HEK293 (cell line): ENCODE measurements at regions of chr12 and their contacts with region 1.

Region 1: GRCh38 chr12:6867413-6868210 is at the start of gene TPI1:
- H3K4me3 ChIP-seq: peak within 1 kb of the TSS; percentile 87
- H3K27ac ChIP-seq: peak within 1 kb of the TSS; percentile 98
- H3K4me1 ChIP-seq: peaks cover 7% of the 10 kb centered on the region
- CTCF ChIP-seq: peak; percentile 10; the same call in 1 of the 2 replicates

Region 2: GRCh38 chr12:6796576-6796975 is 71.0 kb before region 1 on chr12:
- CTCF ChIA-PET with region 1: no interaction called
- POLR2A ChIA-PET with region 1: no interaction called
- H3K4me3 ChIP-seq: no peak overlapping the region
- H3K27ac ChIP-seq: no peak overlapping the region
- H3K4me1 ChIP-seq: no peaks in the 10 kb centered on the region
- CTCF ChIP-seq: no peak

Region 3: DNA sequence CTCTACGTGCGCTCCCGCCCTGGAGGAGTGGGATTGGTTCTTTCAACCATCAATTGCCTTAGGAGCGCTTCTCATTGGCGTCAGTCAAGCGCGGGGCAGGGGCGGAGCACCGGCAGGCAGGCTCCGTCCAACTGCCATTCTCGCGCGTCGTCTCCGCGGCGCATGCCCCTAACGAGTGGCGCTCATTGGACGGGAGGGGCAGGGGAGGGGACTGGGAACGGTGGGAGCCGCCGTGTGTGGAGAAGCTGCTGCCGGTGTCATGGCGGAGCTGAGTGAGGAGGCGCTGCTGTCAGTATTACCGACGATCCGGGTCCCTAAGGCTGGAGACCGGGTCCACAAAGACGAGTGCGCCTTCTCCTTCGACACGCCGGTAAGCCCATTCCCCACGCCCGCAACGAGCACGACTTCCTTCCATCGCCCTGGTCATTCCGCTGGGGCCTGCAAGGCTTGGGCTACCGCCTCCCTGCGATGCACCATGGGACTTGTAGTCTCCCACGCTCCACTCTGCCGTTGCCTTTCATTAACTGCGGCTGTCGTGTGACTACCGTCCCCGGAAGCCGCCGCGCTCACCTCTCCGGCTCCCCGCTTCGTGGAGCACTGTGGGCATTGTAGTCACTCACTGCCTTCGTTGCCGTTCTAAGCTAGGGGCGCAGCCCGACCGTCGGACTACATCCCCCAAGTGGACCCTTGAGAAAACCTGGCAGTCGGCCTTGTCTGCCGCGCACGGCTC is 15.5 kb before region 1 on chr12 and contains the start of gene USP5:
- CTCF ChIA-PET with region 1: interaction called, 71 read pairs
- POLR2A ChIA-PET with region 1: interaction called, 183 read pairs
- H3K4me3 ChIP-seq: peak within 1 kb of the TSS; percentile 76
- H3K27ac ChIP-seq: peak within 1 kb of the TSS; percentile 58
- H3K4me1 ChIP-seq: peaks cover 11% of the 10 kb centered on the region
- CTCF ChIP-seq: peak; percentile 70

Region 4: DNA sequence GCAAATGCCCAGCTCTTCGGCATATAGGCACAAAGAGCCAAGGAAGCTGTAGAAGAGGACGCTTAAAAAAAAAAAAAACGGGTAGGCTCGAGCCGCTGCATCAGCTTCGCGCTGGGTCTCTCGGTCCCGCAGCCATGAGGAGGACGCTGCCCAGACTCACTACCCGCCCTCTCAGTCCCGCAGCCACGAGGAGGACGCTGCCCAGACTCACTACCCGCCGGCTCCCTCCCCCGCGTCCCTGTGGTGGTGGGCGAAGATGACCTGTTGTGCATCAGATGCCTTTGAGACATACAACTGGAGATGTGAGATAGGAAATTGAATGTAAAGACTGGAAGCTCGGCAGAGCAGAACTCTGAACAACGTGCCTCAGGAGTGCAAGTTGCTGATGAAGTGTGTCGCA is 16.9 kb after region 1 on chr12:
- CTCF ChIA-PET with region 1: interaction called, 22 read pairs
- POLR2A ChIA-PET with region 1: interaction called, 23 read pairs
- H3K4me3 ChIP-seq: no peak overlapping the region
- H3K27ac ChIP-seq: no peak overlapping the region
- H3K4me1 ChIP-seq: no peaks in the 10 kb centered on the region
- CTCF ChIP-seq: no peak

Region 5: DNA sequence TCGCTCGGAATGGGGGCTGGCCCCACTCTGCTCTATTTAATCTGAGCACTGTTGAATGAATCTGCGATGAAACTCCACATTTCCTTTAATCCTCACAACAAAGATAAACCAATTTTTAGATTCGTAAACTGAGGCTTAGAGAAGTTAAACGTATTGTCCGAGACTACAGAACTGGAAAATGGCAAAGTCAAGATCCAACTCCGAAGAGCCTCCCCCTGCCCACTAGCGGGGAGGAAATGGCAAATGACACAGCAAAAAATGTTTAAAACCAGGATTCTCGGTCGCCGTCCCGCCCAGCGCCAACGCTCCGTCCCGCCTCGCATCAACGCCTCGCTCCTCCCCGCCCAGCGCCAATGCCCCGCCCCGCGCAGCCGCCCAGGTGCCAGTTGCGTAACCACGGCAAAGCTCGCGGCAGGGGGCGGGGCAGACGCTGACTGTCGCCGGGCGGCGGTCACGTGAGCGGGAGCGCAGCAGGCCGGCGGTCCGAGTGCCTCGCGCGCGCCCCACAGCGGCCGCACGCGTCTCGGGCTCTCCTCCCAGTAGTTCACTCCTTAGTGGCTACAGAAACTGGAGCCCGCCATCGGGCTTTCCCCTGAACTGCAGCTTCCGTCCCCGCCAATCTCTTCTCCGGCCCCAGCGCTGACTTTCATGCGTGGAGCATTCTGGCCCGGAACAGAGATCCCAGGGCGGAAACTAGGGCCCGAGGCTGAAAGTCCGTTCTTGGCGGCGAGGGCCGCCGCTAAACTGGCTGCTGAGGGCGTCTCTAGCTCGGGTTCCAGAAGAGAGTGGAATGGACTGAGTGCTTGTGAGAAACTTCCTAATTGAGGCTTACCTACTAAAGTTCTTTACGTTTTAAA is 23.4 kb after region 1 on chr12:
- CTCF ChIA-PET with region 1: interaction called, 35 read pairs
- POLR2A ChIA-PET with region 1: interaction called, 56 read pairs
- H3K4me3 ChIP-seq: peak overlapping the region; percentile 30
- H3K27ac ChIP-seq: peak overlapping the region; percentile 78
- H3K4me1 ChIP-seq: no peaks in the 10 kb centered on the region
- CTCF ChIP-seq: peak; percentile 86

Region 6: DNA sequence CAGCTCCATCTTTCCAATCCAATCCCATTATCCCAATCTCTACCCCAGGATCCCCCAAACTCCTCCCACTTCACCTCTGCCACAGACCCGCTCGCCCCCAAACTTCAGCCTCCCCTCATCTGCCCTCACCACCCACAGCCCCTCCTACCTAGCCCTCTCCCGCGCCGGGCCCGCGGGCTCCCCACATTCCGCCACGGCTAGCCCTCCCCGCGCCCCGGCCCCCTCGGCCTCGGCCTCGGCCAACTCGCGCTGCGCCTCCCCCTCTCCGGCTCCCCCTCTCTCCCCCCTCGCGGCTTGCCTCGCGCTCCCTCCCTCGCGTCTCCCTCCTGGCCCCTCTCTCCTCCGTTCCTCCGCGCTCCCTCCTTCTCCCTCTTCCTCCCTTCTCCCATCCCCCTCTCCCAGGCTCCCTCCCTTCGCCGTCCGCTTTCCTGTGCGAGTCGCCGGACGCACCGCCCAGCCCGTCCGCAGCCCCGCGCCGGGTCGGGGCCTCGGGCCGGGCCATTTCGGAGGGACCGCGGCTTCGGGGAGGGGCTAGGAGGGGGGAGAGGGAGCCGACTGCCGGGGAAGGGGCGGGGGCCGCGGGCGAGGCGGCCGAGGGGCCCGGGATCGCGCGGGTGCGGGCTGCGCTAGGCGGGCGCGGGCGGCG is 59.9 kb after region 1 on chr12 and contains the start of gene ATN1:
- CTCF ChIA-PET with region 1: interaction called, 25 read pairs
- POLR2A ChIA-PET with region 1: interaction called, 32 read pairs
- H3K4me3 ChIP-seq: peak within 1 kb of the TSS; percentile 74
- H3K27ac ChIP-seq: peak within 1 kb of the TSS; percentile 80
- H3K4me1 ChIP-seq: peaks cover 28% of the 10 kb centered on the region
- CTCF ChIP-seq: 0 out of 2 replicates have a peak, but pooled peaks have one; percentile 38

Region 7: GRCh38 chr12:6937481-6938297 is 70.1 kb after region 1 on chr12:
- CTCF ChIA-PET with region 1: interaction called, 10 read pairs
- POLR2A ChIA-PET with region 1: interaction called, 45 read pairs
- H3K4me3 ChIP-seq: peak overlapping the region; percentile 54
- H3K27ac ChIP-seq: peak overlapping the region; percentile 95
- H3K4me1 ChIP-seq: peaks cover 6% of the 10 kb centered on the region
- CTCF ChIP-seq: peak; percentile 98

Region 8: GRCh38 chr12:7197841-7198240 is 330.2 kb after region 1 on chr12:
- CTCF ChIA-PET with region 1: no interaction called
- POLR2A ChIA-PET with region 1: no interaction called
- H3K4me3 ChIP-seq: no peak overlapping the region
- H3K27ac ChIP-seq: no peak overlapping the region
- H3K4me1 ChIP-seq: peaks cover 13% of the 10 kb centered on the region
- CTCF ChIP-seq: no peak